ENCODE measurements at regions of chr1 and their contacts with region 1.

Region 1: DNA sequence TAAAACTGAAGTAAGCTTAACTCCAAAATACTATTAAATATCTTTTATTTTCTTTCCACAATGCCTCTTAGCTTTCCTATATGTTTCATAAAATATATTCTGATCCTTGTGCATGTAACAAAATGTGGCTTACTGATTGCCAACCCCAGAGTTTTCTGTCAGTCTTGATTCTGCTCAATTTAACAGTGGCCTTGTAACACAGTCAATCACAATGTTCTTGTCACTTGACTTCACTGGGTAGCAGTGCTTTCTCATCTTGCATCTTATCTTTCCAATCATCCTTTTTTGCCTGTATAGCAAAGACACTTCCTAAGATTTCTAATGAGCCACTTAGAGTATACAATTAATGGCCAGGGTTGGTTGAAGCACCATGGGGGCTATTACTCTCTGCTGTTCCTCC is 19.9 kb upstream of the BRINP3 start:
- DNase-seq: no peak

Region 2: DNA sequence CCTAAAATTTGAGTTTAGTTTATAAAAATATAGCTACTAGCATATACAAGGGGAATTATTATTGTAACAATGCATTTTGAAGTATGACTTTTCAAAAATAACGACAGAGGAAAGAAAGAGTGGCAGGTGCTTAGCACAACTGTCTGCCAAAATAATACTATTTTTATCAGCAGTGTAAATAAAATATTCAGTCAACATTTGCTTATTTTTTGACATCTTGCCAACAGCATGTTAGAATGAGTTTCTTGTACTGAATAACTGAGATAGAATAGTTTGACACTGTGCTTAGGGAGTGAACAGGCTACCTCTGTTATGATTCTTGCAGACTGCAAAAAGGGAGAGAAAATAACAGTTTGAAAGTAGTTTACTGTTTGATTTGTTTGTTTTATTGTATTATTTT is 929.7 kb before region 1 on chr1:
- intact Hi-C with region 1: no loop called
- DNase-seq: no peak

Region 3: GRCh38 chr1:190578017-190578416 is 80.5 kb after region 1 on chr1:
- intact Hi-C with region 1: loop called (anchors 5 kb)
- DNase-seq: no peak

Measured in cardiac septum (tissue), 1 donor.